CD4-positive, alpha-beta memory T cell (primary cell): ENCODE measurements at regions of chr19 and their contacts with region 1.

Region 1: DNA sequence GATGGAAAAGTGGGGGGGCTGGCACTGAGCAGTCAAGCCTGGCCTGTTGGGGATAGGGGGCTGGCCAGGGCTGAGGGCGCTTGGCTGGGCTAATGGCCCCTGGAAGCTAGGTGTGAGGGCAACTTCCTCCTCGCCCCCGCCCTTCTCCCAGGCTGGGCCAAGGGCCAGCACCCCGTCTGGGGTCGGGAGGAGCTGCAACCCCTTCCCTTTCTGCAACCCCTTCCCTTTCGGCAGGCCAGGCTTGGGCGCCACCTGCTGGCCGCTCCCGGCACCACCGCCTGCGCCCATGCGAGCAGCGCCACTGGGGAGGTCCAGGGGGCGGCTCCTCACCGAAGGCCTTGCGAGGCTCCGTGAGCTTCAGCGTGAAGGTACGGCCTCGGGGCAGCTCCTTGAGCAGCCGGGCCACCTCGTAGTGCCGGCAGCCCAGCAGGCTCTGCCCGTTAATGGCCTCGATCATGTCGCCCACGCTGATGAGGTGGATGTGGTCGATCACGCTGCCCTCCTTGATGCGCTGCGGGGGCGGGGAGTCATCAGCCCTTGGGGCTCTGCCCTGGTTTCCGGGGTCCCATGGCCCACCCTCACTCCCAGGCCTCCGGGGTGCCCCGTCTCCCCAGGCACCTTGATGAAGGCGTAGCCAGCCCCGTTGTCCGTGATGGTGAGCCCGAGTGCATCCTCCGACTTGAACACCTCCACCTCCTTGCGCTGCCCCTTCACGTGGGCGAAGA is 5.0 kb upstream of the PTGER1 start:
- DNase-seq: peak; percentile 56 to 75 (median 64)
- H3K4me3 ChIP-seq: no peak overlapping the region
- H3K4me3 Mint-ChIP-seq: no peak overlapping the region
- H3K27ac ChIP-seq: no peak overlapping the region
- H3K27ac Mint-ChIP-seq: no peak overlapping the region
- H3K4me1 ChIP-seq: peaks cover 18% of the 10 kb centered on the region
- H3K4me1 Mint-ChIP-seq: peaks cover 7 to 15% (median 11%) of the 10 kb centered on the region in 4 donors
- H3K27me3 ChIP-seq: no peaks in the 10 kb centered on the region
- H3K27me3 Mint-ChIP-seq: peaks cover 0 to 7% of the 10 kb centered on the region in 2 donors

Region 2: DNA sequence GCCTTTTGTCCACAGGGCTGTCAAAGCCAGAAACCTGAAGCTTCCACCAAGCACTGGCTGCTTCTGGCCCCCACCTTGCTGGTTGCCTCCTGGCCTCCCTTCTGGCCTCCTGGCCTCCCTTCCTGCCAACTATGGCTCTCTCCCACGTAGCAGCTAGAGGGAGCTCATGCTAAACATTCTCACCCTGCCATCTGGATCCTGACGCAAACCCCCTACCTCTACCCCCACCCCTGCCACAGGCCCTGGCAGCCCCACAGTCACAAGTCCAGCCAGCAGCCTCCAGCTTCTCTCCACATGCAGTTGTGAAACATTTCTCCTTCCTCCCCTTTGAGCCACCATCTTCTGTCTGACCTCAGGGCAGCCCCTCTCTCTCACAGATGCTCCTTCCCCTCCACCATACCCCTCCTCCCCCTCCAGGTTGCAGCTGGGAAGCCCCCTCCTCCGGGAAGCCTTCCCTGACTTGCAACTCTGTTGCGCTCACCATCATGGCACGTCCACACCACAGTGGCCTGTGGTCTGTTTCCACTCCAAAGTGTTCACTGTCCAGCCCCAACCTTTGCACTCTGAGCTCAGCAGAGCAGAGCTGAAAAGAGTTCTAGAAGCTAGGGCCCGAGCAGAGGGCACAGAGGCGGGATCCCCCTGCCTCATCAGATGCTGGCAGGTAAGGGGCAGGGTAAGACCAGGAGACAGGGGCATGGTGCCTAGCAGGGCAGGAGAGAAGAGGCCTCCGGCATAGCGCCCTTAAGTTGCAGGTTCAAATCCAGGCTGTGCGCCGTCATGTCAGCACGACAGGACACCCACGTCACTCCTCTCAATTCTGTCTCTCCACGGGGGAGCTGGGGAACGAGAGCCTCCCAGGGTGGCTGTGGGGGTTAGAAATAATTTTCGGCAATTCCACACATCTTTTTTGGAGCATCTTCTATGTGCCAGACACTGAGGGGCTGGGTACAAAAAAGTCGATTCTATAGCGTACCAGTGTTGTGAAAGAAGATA is 281.5 kb before region 1 on chr19:
- CTCF ChIA-PET with region 1: interaction called, 3 read pairs
- POLR2A ChIA-PET with region 1: no interaction called
- intact Hi-C with region 1: loop called (anchors 10 kb)
- DNase-seq: no peak
- H3K4me3 ChIP-seq: no peak overlapping the region
- H3K4me3 Mint-ChIP-seq: no peak overlapping the region
- H3K27ac ChIP-seq: no peak overlapping the region
- H3K27ac Mint-ChIP-seq: no peak overlapping the region
- H3K4me1 ChIP-seq: peaks cover 3% of the 10 kb centered on the region
- H3K4me1 Mint-ChIP-seq: peaks cover 15 to 47% (median 33%) of the 10 kb centered on the region in 4 donors
- H3K27me3 ChIP-seq: no peaks in the 10 kb centered on the region
- H3K27me3 Mint-ChIP-seq: peaks cover 0 to 1% of the 10 kb centered on the region in 2 donors

Region 3: GRCh38 chr19:14432791-14433553 is 47.2 kb before region 1 on chr19 and contains the start of gene PKN1:
- CTCF ChIA-PET with region 1: interaction called, 44 read pairs
- POLR2A ChIA-PET with region 1: interaction called, 4 read pairs
- intact Hi-C with region 1: loop called (anchors 2 kb)
- DNase-seq: peak in 3 of 5 donors; percentile 20 to 55 (median 22)
- H3K4me3 ChIP-seq: peak within 1 kb of the TSS; percentile 60 to 61
- H3K4me3 Mint-ChIP-seq: peak within 1 kb of the TSS; percentile 83 to 93 (median 88)
- H3K27ac ChIP-seq: peak within 1 kb of the TSS; percentile 72
- H3K27ac Mint-ChIP-seq: peak within 1 kb of the TSS; percentile 84 to 95 (median 89)
- H3K4me1 ChIP-seq: peaks cover 31% of the 10 kb centered on the region
- H3K4me1 Mint-ChIP-seq: peaks cover 16 to 49% (median 33%) of the 10 kb centered on the region in 4 donors
- H3K27me3 ChIP-seq: no peaks in the 10 kb centered on the region
- H3K27me3 Mint-ChIP-seq: no peaks in the 10 kb centered on the region
- total RNA-seq, gene PKN1: 189 to 205 TPM

Region 4: GRCh38 chr19:14459703-14460102 is 20.4 kb before region 1 on chr19:
- CTCF ChIA-PET with region 1: interaction called, 11 read pairs
- POLR2A ChIA-PET with region 1: no interaction called
- intact Hi-C with region 1: no loop called
- DNase-seq: no peak
- H3K4me3 ChIP-seq: no peak overlapping the region
- H3K4me3 Mint-ChIP-seq: no peak overlapping the region
- H3K27ac ChIP-seq: no peak overlapping the region
- H3K27ac Mint-ChIP-seq: peak overlapping the region in 4 of 7 donors; percentile 22 to 77 (median 54)
- H3K4me1 ChIP-seq: no peaks in the 10 kb centered on the region
- H3K4me1 Mint-ChIP-seq: peaks cover 0 to 7% (median 2%) of the 10 kb centered on the region in 4 donors
- H3K27me3 ChIP-seq: no peaks in the 10 kb centered on the region
- H3K27me3 Mint-ChIP-seq: no peaks in the 10 kb centered on the region

Region 5: GRCh38 chr19:14496028-14496833 is 16.1 kb after region 1 on chr19 and contains the start of gene GIPC1:
- CTCF ChIA-PET with region 1: interaction called, 10 read pairs
- POLR2A ChIA-PET with region 1: interaction called, 6 read pairs
- intact Hi-C with region 1: no loop called
- DNase-seq: peak; percentile 83 to 90 (median 85)
- H3K4me3 ChIP-seq: peak within 1 kb of the TSS; percentile 42 to 56
- H3K4me3 Mint-ChIP-seq: peak within 1 kb of the TSS; percentile 84 to 92 (median 88)
- H3K27ac ChIP-seq: peak within 1 kb of the TSS; percentile 63
- H3K27ac Mint-ChIP-seq: peak within 1 kb of the TSS; percentile 84 to 96 (median 90)
- H3K4me1 ChIP-seq: peaks cover 27% of the 10 kb centered on the region
- H3K4me1 Mint-ChIP-seq: peaks cover 23 to 40% (median 29%) of the 10 kb centered on the region in 4 donors
- H3K27me3 ChIP-seq: no peaks in the 10 kb centered on the region
- H3K27me3 Mint-ChIP-seq: no peaks in the 10 kb centered on the region
- total RNA-seq, gene GIPC1: 32.3 to 33.8 TPM

Region 6: GRCh38 chr19:14550201-14550784 is 70.2 kb after region 1 on chr19:
- CTCF ChIA-PET with region 1: interaction called, 16 read pairs
- POLR2A ChIA-PET with region 1: no interaction called
- intact Hi-C with region 1: no loop called
- DNase-seq: no peak
- H3K4me3 ChIP-seq: no peak overlapping the region
- H3K4me3 Mint-ChIP-seq: peak overlapping the region in 1 of 8 donors; percentile 36
- H3K27ac ChIP-seq: no peak overlapping the region
- H3K27ac Mint-ChIP-seq: peak overlapping the region in 4 of 7 donors; percentile 63 to 95 (median 73)
- H3K4me1 ChIP-seq: peaks cover 38% of the 10 kb centered on the region
- H3K4me1 Mint-ChIP-seq: peaks cover 19 to 64% (median 34%) of the 10 kb centered on the region in 4 donors
- H3K27me3 ChIP-seq: no peaks in the 10 kb centered on the region
- H3K27me3 Mint-ChIP-seq: no peaks in the 10 kb centered on the region

Region 7: DNA sequence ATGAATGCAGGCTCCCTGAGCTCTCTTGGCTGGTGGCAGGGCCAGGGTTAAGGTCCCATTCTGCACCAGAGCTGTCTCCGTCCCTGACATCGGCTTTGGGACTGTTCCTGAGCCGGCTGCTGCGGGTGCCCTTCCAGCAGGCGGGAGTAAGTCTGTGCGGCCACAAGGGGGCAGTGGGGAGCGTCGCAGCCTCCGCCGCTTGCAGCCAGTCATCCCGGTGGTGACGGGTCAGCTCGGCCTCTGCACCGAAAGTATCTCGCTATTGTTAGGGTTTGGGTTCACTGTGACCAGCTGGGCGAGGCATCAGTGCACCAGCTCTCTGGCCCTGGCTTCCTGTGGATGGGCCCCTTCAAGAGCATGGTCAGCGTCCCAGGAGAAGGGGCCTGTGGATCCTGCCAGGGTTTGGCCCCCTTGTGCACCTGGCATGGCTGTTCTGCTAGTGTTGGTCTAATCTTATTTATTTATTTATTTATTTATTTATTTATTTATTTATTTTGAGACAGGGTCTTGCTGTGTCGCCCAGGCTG is 76.6 kb after region 1 on chr19:
- CTCF ChIA-PET with region 1: interaction called, 16 read pairs
- POLR2A ChIA-PET with region 1: no interaction called
- intact Hi-C with region 1: no loop called
- DNase-seq: peak; percentile 58 to 65 (median 62)
- H3K4me3 ChIP-seq: peak overlapping the region in 1 of 2 donors; percentile 18
- H3K4me3 Mint-ChIP-seq: peak overlapping the region; percentile 36 to 79 (median 60)
- H3K27ac ChIP-seq: no peak overlapping the region
- H3K27ac Mint-ChIP-seq: peak overlapping the region in 6 of 7 donors; percentile 52 to 95 (median 74)
- H3K4me1 ChIP-seq: peaks cover 45% of the 10 kb centered on the region
- H3K4me1 Mint-ChIP-seq: peaks cover 24 to 65% (median 30%) of the 10 kb centered on the region in 4 donors
- H3K27me3 ChIP-seq: no peaks in the 10 kb centered on the region
- H3K27me3 Mint-ChIP-seq: no peaks in the 10 kb centered on the region